ENCODE measurements at regions of chr19 and their contacts with region 1.

Region 1: GRCh38 chr19:46192992-46193650 is 36.4 kb upstream of the IGFL1 start:
- DNase-seq: no peak
- CTCF ChIP-seq: no peak

Region 2: DNA sequence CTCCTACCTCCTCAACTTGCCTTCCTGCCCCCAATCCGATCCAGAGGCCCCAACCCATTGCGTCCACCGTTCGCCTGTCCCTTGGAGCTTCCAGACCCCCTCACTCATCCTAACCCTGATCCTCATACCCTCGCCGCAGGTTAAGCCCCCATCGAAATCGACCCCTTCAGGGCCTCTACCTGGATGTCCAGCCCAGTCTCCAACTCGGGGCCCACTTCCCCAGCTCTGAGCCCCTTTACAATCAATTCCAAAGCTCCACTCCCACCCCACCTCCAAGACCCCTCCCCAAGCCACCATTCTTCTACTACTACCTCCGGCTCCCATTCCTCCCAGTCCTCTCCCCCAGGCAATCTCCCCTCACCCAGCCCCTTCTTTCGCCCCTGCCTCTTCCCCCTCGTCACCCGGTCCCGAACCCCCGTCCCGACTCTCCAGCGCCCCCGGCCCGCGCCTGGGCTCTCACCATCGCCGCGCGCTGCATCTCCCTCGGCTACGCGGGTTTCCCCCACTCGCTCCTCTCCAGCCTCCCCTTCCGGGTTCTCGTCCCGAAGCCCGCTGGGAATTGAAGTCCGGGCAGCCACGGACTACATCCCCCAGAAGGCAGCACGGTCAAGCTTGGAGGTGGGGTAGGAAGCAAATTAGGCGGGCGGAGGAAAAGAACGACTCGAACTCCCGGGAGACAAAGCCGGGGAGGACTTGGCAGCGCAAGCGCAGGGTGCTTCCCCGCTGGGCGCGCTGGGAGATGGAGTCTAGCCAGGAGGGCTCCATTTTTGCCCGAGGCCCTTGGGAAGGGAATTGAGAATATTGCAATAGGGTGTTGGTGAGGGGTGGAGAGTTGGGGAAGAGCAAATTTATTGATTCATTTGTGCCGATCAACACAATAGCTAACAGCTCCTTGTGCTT is 462.5 kb before region 1 on chr19 and contains the start of gene FBXO46:
- in situ Hi-C with region 1: no loop called
- DNase-seq: peak; percentile 98
- CTCF ChIP-seq: peak; percentile 23

Region 3: GRCh38 chr19:45976178-45976577 is 216.9 kb before region 1 on chr19:
- in situ Hi-C with region 1: no loop called
- DNase-seq: no peak
- CTCF ChIP-seq: no peak

Region 4: GRCh38 chr19:46081928-46082727 is 111.0 kb before region 1 on chr19:
- in situ Hi-C with region 1: loop called (anchors 10 kb)
- DNase-seq: peak; percentile 62
- CTCF ChIP-seq: peak; percentile 30

Measured in GM13976 (cell line).